ENCODE measurements at regions of chr6 and their contacts with region 1.

Region 1: GRCh38 chr6:33139596-33140206 is 52.6 kb downstream of the COL11A2 start:
- DNase-seq: no peak
- ATAC-seq: no peak
- H3K4me3 Mint-ChIP-seq: no peak overlapping the region
- H3K27ac Mint-ChIP-seq: no peak overlapping the region
- H3K4me1 Mint-ChIP-seq: peaks cover 22% of the 10 kb centered on the region
- H3K27me3 Mint-ChIP-seq: no peaks in the 10 kb centered on the region
- CTCF ChIP-seq: no peak

Region 2: GRCh38 chr6:33126101-33126714 is 13.5 kb before region 1 on chr6:
- CTCF ChIA-PET with region 1: interaction called, 12 read pairs
- POLR2A ChIA-PET with region 1: interaction called, 5 read pairs
- intact Hi-C with region 1: no loop called
- DNase-seq: peak; percentile 59
- ATAC-seq: peak; percentile 73
- H3K4me3 Mint-ChIP-seq: no peak overlapping the region
- H3K27ac Mint-ChIP-seq: no peak overlapping the region
- H3K4me1 Mint-ChIP-seq: peaks cover 4% of the 10 kb centered on the region
- H3K27me3 Mint-ChIP-seq: no peaks in the 10 kb centered on the region
- CTCF ChIP-seq: no peak